CD8-positive, alpha-beta memory T cell (primary cell): ENCODE measurements at regions of chr5 and their contacts with region 1.

Region 1: DNA sequence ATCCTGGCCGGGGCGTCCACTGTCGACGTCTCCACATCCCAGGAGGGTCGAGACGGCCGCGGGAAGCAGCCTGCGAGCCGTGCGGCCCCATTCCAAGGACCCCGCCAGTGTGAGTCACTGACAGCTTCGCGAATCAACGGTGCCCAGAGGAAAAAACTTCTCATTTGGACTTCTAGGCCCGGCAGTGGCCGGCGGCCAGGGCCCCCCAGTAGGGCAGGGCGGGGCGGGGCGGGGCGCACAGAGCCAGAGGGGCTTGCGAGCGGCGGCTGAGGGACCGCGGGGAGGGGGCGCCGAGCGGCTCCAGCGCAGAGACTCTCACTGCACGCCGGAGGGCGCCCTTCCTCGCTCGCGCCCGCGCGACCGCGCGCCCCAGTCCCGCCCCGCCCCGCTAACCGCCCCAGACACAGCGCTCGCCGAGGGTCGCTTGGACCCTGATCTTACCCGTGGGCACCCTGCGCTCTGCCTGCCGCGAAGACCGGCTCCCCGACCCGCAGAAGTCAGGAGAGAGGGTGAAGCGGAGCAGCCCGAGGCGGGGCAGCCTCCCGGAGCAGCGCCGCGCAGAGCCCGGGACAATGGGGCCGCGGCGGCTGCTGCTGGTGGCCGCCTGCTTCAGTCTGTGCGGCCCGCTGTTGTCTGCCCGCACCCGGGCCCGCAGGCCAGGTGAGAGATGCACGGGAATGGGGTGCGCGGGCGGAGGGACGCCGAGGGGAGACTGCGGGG is at the start of gene F2R:
- DNase-seq: peak; percentile 21 to 81 (median 52)
- H3K4me3 ChIP-seq: peak within 1 kb of the TSS; percentile 77
- H3K4me3 Mint-ChIP-seq: peak within 1 kb of the TSS; percentile 80 to 98 (median 91)
- H3K27ac ChIP-seq: peak within 1 kb of the TSS; percentile 72
- H3K27ac Mint-ChIP-seq: peak within 1 kb of the TSS; percentile 76 to 97 (median 90)
- H3K4me1 ChIP-seq: peaks cover 14% of the 10 kb centered on the region
- H3K4me1 Mint-ChIP-seq: peaks cover 45 to 60% (median 58%) of the 10 kb centered on the region in 3 donors
- H3K27me3 ChIP-seq: no peaks in the 10 kb centered on the region
- H3K27me3 Mint-ChIP-seq: no peaks in the 10 kb centered on the region
- total RNA-seq, gene F2R: 26.6 to 27.4 TPM

Region 2: DNA sequence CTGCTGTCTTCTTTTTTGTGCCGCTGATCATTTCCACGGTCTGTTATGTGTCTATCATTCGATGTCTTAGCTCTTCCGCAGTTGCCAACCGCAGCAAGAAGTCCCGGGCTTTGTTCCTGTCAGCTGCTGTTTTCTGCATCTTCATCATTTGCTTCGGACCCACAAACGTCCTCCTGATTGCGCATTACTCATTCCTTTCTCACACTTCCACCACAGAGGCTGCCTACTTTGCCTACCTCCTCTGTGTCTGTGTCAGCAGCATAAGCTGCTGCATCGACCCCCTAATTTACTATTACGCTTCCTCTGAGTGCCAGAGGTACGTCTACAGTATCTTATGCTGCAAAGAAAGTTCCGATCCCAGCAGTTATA is 17.1 kb after region 1 on chr5:
- CTCF ChIA-PET with region 1: interaction called, 17 read pairs
- POLR2A ChIA-PET with region 1: interaction called, 8 read pairs
- DNase-seq: peak; percentile 11 to 90 (median 59)
- H3K4me3 ChIP-seq: peak overlapping the region; percentile 18
- H3K4me3 Mint-ChIP-seq: peak overlapping the region; percentile 69 to 88 (median 78)
- H3K27ac ChIP-seq: peak overlapping the region; percentile 81
- H3K27ac Mint-ChIP-seq: peak overlapping the region; percentile 82 to 99 (median 95)
- H3K4me1 ChIP-seq: peaks cover 51% of the 10 kb centered on the region
- H3K4me1 Mint-ChIP-seq: peaks cover 56 to 77% (median 70%) of the 10 kb centered on the region in 3 donors
- H3K27me3 ChIP-seq: no peaks in the 10 kb centered on the region
- H3K27me3 Mint-ChIP-seq: no peaks in the 10 kb centered on the region

Region 3: DNA sequence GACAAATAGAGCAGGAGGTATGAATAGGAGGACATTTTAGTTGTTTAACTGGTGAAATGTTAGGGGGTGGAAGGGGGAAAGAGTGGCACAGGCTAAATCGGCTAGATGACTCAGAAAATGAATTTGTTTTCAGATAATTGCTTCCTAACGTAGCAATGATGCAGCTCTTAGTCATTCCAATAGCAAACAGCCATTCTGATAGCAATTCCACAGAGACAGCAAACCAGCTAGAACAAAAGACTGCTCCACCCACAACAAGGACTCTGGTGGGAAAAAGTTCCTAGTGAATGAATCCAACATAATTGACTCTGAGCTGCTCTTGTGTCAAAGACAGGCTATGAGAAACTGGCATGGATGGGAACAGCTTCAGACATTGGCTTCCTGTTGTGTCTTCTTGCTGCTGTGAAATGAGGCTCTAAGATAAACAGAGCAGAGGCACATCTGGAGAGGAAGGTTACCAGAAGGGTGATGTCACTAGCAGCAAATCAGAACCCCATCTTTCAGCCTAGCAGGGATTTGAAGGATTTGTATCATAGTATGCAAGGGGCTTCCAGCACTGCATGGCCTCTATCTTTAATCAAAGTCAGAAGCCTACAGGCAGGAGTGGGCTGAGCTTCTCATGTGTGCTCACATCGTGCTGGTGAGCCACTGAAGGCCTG is 74.9 kb after region 1 on chr5:
- CTCF ChIA-PET with region 1: no interaction called
- POLR2A ChIA-PET with region 1: no interaction called
- DNase-seq: no peak
- H3K4me3 ChIP-seq: no peak overlapping the region
- H3K4me3 Mint-ChIP-seq: peak overlapping the region in 1 of 7 donors; percentile 24
- H3K27ac ChIP-seq: no peak overlapping the region
- H3K27ac Mint-ChIP-seq: peak overlapping the region; percentile 16 to 89 (median 64)
- H3K4me1 ChIP-seq: no peaks in the 10 kb centered on the region
- H3K4me1 Mint-ChIP-seq: peaks cover 4 to 16% (median 14%) of the 10 kb centered on the region in 3 donors
- H3K27me3 ChIP-seq: no peaks in the 10 kb centered on the region
- H3K27me3 Mint-ChIP-seq: peaks cover 0 to under 1% of the 10 kb centered on the region in 2 donors